RWPE1 (cell line): ENCODE measurements at regions of chr5 and their contacts with region 1.

Region 1: GRCh38 chr5:177370488-177371119 is 12.9 kb downstream of the RGS14 start:
- DNase-seq: peak; percentile 96
- H3K27ac ChIP-seq: peak overlapping the region; percentile 89
- CTCF ChIP-seq: peak; percentile 87

Region 2: GRCh38 chr5:177351385-177352329 is 18.9 kb before region 1 on chr5 and contains the start of gene LMAN2:
- CTCF ChIA-PET with region 1: interaction called, 15 read pairs
- POLR2A ChIA-PET with region 1: interaction called, 3 read pairs
- DNase-seq: peak; percentile 99
- H3K27ac ChIP-seq: peak within 1 kb of the TSS; percentile 95
- CTCF ChIP-seq: no peak

Region 3: DNA sequence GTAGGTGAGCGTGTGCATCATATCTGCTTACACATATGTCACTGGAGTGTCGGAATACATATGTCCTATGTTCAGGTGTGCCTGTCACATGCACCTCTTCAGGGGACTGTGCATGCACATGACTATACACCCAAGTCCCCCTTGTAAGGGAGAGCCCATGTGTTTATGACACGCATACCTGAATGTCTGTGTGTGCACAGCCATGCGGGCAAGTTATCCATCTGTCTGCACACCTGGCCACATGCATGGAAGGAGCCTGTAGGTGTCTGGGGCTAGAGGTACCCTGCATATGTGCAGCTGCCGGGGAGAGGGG is 13.5 kb before region 1 on chr5:
- CTCF ChIA-PET with region 1: interaction called, 15 read pairs
- POLR2A ChIA-PET with region 1: no interaction called
- DNase-seq: no peak
- H3K27ac ChIP-seq: peak overlapping the region; percentile 89
- CTCF ChIP-seq: no peak

Region 4: DNA sequence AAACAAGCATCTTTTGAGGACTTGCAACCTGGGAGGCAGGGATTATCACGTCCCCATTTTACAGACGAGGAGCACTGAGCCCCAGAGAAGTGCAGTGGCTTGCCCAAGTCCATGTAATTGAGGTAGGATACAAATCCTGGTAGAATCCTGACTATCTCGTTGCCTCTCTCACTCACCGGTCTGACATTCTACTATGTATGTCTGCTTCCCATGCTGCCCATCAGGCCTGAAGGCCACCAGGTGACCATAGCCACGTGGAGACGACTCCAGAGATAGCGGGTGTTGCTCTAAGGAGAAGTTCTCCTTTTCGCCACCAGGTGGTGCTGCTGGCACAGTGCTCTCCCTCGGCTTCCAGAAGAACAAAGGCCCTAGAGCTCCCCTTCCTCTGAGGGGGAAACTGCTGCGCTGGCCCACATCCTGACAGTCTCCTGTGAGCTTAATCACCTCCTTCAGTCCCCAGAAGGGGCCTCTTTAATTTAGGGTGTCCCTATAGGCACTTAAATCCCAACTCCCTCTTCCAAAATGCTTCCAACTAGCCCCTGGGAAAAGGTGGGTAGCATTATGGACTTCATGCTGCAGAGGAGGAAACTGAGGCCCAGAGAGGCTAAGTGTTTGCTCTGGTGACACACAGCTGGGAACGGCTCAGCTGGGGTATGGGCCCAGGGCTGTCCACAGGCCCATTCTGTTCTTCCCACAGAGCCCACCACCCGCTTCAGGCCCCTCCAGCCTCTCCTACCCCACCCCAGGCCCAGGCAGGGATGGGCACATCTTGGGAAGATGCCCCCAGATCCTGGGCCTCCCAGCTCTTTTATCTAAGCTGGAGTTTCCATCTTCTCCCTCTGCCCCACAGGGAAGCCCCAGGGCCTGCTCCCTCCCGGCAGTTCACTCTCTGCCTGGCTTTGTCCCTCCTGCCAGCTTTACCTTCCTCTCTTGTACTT is 20.0 kb after region 1 on chr5:
- CTCF ChIA-PET with region 1: interaction called, 38 read pairs
- POLR2A ChIA-PET with region 1: interaction called, 15 read pairs
- DNase-seq: peak; percentile 94
- H3K27ac ChIP-seq: peak overlapping the region; percentile 99
- CTCF ChIP-seq: peak; percentile 98

Region 5: DNA sequence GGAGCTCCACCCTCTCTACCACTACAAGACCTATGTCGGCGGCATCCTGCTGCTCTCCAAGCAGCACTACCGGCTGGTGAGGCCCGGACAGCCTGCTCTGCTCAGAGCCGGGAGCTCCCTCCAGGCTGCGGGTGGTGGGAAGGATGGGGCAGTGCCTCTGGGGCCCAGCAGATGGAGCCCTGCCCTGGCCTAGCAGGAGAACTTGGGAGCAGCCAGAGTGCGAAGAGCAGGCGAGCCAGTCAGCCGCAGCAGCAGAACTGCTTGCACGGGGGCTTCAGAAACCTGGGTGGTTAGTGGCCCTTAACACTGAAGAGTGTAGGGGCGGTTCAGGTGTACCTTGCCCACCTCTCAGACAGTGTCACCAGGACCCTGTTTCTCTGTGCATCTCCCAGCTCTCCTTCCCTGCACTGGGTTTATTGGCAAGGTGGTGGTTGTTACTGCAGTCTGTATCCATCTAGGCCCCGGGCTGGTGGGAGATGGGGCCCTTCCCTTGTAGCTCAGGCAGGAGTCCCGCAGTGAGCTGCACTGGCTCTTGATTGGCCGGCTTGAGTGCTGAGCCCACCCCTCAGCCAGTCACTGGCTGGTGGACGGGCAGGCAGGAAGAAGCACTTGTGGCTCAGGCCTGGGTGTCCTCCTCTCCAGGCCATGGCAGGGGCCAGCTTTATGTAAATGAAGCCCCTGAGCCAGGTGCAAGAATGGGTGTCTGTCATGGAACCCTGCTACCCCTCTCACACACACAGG is 237.0 kb after region 1 on chr5:
- CTCF ChIA-PET with region 1: no interaction called
- POLR2A ChIA-PET with region 1: no interaction called
- DNase-seq: peak; percentile 86
- H3K27ac ChIP-seq: peak overlapping the region; percentile 2; the same call in 1 of the 2 replicates
- CTCF ChIP-seq: peak; percentile 95